ENCODE measurements at regions of chr6 and their contacts with region 1.

Region 1: GRCh38 chr6:138115877-138116660 is 8.8 kb upstream of the PERP start:
- DNase-seq: peak; percentile 74
- ATAC-seq: peak; percentile 89
- H3K4me3 ChIP-seq: no peak overlapping the region
- H3K27ac ChIP-seq: no peak overlapping the region
- H3K4me1 ChIP-seq: no peaks in the 10 kb centered on the region
- H3K27me3 ChIP-seq: peaks cover 19% of the 10 kb centered on the region
- CTCF ChIP-seq: peak; percentile 87
- POLR2A ChIP-seq: no peak
- RAD21 ChIP-seq: peak; percentile 87

Region 2: DNA sequence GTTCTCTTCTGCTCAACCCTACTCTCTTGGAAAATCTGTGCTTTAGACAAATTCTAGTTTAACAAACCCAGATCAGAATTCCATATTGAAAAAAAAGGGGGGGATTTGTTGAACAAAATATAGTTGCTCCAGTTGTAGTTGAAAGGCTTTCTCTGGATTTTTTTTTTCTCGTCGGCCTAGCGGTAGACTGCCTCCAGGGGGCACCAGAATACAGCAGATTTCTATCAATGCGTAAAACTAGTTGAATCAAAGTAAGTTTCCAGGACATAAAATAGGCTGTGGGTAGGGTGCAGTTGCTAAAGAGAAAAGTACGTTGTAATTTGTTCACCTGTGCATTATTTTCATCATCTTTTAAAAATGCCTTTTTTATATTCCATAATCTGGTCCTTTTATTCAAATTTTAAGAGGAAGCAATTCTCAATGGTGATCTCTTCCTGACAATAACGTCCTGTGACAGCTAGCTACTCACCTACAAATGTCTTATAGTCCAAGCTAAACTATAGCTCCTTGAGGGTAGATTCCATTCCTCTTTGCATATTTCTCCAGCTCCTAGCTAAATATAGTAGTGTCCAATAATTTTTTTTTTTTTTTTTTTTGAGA is 114.2 kb before region 1 on chr6:
- CTCF ChIA-PET with region 1: interaction called, 6 read pairs
- POLR2A ChIA-PET with region 1: no interaction called
- dilution Hi-C with region 1: no loop called
- in situ Hi-C with region 1: loop called (anchors 5 kb)
- intact Hi-C with region 1: no loop called
- DNase-seq: peak; percentile 53
- ATAC-seq: peak; percentile 70
- H3K4me3 ChIP-seq: no peak overlapping the region
- H3K27ac ChIP-seq: no peak overlapping the region
- H3K4me1 ChIP-seq: no peaks in the 10 kb centered on the region
- H3K27me3 ChIP-seq: peaks cover 9% of the 10 kb centered on the region
- CTCF ChIP-seq: peak; percentile 90
- POLR2A ChIP-seq: no peak
- RAD21 ChIP-seq: peak; percentile 91

Region 3: DNA sequence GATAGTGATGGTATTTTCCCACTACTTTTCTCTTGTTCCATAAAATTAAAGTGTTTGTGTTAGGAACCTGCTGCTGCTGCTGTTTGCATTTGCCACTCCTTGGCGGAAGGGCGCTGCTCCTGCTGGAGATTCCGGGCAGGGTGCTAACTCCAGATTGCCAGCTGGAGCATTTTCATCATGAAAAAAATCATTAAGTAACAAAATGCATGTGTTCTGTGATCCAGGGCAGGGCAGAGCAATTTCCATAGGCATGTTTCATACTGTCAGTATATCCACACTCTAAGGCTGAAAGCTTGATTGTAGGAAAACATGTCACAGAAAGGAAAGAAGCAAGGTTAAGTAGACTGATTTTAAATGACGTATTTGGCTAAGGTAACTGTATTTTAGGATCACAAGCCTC is 78.2 kb after region 1 on chr6:
- CTCF ChIA-PET with region 1: no interaction called
- POLR2A ChIA-PET with region 1: no interaction called
- dilution Hi-C with region 1: no loop called
- in situ Hi-C with region 1: no loop called
- intact Hi-C with region 1: no loop called
- DNase-seq: no peak
- ATAC-seq: no peak
- H3K4me3 ChIP-seq: no peak overlapping the region
- H3K27ac ChIP-seq: no peak overlapping the region
- H3K4me1 ChIP-seq: no peaks in the 10 kb centered on the region
- H3K27me3 ChIP-seq: peaks cover 7% of the 10 kb centered on the region
- CTCF ChIP-seq: no peak
- POLR2A ChIP-seq: no peak
- RAD21 ChIP-seq: no peak

Region 4: GRCh38 chr6:138397128-138398122 is 281.4 kb after region 1 on chr6:
- CTCF ChIA-PET with region 1: interaction called, 5 read pairs
- POLR2A ChIA-PET with region 1: no interaction called
- dilution Hi-C with region 1: no loop called
- in situ Hi-C with region 1: no loop called
- intact Hi-C with region 1: loop called (anchors 2 kb)
- DNase-seq: peak; percentile 32
- ATAC-seq: peak; percentile 72
- H3K4me3 ChIP-seq: no peak overlapping the region
- H3K27ac ChIP-seq: no peak overlapping the region
- H3K4me1 ChIP-seq: peaks cover 6% of the 10 kb centered on the region
- H3K27me3 ChIP-seq: peaks cover 4% of the 10 kb centered on the region; the same call in 1 of the 2 replicates
- CTCF ChIP-seq: no peak
- POLR2A ChIP-seq: no peak
- RAD21 ChIP-seq: no peak

Region 5: DNA sequence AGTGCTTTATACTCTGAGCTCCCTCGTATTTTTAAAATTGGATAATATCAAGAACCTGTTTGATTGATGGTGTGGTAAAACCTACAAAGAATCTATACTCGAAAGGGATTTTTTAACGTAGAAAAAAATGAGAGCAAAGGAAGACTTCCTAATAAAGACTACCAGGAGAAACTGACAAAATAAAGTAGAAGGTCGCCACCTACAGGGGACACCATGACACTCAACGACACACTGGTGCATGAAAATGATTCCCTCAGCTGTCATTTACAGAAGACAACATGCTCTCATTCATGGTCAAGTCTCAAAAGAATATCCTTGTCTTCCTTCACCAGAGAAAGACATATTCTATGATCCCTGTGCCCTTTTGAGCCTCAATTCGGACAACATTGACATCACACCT is 393.3 kb after region 1 on chr6:
- CTCF ChIA-PET with region 1: no interaction called
- POLR2A ChIA-PET with region 1: no interaction called
- dilution Hi-C with region 1: no loop called
- in situ Hi-C with region 1: no loop called
- intact Hi-C with region 1: loop called (anchors 2 kb)
- DNase-seq: peak; percentile 52
- ATAC-seq: 0 out of 2 replicates have a peak, but pooled peaks have one; percentile 46
- H3K4me3 ChIP-seq: no peak overlapping the region
- H3K27ac ChIP-seq: no peak overlapping the region
- H3K4me1 ChIP-seq: no peaks in the 10 kb centered on the region
- H3K27me3 ChIP-seq: no peaks in the 10 kb centered on the region
- CTCF ChIP-seq: peak; percentile 55
- POLR2A ChIP-seq: no peak
- RAD21 ChIP-seq: peak; percentile 65

Region 6: DNA sequence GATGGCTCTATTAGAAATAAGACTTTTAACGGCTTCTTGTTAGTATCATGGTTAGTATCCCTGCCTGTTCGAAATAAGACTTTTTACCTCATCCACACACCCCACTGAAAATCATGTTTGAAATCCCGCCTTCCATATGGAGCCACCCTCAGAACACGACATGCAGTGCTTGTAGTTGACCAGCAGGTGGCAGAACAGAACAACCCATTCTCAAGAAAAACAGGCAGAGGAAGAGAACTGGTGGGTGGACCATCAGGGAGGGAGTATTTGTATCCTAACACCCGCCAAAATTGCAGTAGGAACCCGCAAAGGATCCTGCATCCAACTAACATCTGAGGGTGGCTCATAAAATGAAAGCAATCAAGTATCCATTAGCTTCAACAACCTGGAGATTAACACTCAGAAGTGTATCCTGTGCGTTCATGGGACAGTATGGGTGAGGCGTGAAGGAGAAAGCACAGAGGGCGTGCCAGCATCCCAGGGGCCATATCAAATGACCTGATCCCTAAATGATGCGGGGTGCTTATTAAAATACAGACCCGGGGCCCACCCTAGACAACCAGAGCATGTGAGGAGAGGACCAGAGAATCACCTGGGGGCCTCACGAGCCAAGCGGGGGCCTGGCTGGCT is 472.9 kb after region 1 on chr6:
- CTCF ChIA-PET with region 1: no interaction called
- POLR2A ChIA-PET with region 1: no interaction called
- dilution Hi-C with region 1: no loop called
- in situ Hi-C with region 1: loop called (anchors 10 kb)
- intact Hi-C with region 1: loop called (anchors 1 kb)
- DNase-seq: peak; percentile 83
- ATAC-seq: peak; percentile 67
- H3K4me3 ChIP-seq: no peak overlapping the region
- H3K27ac ChIP-seq: no peak overlapping the region
- H3K4me1 ChIP-seq: peaks cover 2% of the 10 kb centered on the region
- H3K27me3 ChIP-seq: no peaks in the 10 kb centered on the region
- CTCF ChIP-seq: peak; percentile 92
- POLR2A ChIP-seq: 0 out of 2 replicates have a peak, but pooled peaks have one; percentile 35
- RAD21 ChIP-seq: peak; percentile 90

Region 7: GRCh38 chr6:138765896-138766655 is 650.0 kb after region 1 on chr6:
- CTCF ChIA-PET with region 1: interaction called, 3 read pairs
- POLR2A ChIA-PET with region 1: no interaction called
- dilution Hi-C with region 1: no loop called
- in situ Hi-C with region 1: loop called (anchors 5 kb)
- intact Hi-C with region 1: loop called (anchors 5 kb)
- DNase-seq: peak; percentile 56
- ATAC-seq: peak; percentile 56; the same call in 1 of the 2 replicates
- H3K4me3 ChIP-seq: no peak overlapping the region
- H3K27ac ChIP-seq: no peak overlapping the region
- H3K4me1 ChIP-seq: no peaks in the 10 kb centered on the region
- H3K27me3 ChIP-seq: no peaks in the 10 kb centered on the region
- CTCF ChIP-seq: peak; percentile 71
- POLR2A ChIP-seq: no peak
- RAD21 ChIP-seq: peak; percentile 71

Region 8: DNA sequence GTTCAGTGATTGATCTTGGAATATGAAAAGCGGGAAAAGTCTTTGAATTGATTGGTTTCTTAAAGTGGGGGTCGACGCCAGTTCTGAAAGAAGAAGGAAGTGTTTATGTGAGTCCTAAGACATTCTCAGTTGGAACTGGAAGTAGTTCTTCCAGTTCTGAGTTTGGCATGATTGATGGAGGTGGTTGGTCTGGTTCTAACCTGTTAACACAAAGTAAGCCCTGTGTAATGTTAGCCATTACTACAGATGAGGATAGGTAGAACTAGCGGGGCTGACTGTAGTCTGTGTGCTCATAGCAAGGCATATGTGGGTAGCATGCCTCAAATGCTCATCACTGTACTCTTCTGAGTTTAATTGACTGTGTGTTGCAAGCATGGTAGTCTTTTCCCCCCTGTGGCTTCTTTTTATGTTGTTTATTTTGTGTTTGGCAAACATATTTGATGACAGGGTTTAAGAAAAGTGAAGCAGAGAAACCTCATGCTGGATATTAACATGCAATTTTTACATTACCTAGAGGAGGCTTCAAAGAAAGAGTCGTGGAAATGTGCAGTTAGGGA is 1233.5 kb after region 1 on chr6:
- CTCF ChIA-PET with region 1: no interaction called
- POLR2A ChIA-PET with region 1: no interaction called
- dilution Hi-C with region 1: no loop called
- in situ Hi-C with region 1: loop called (anchors 25 kb)
- intact Hi-C with region 1: loop called (anchors 5 kb)
- DNase-seq: no peak
- ATAC-seq: no peak
- H3K4me3 ChIP-seq: no peak overlapping the region
- H3K27ac ChIP-seq: no peak overlapping the region
- H3K4me1 ChIP-seq: no peaks in the 10 kb centered on the region
- H3K27me3 ChIP-seq: no peaks in the 10 kb centered on the region
- CTCF ChIP-seq: no peak
- POLR2A ChIP-seq: no peak
- RAD21 ChIP-seq: no peak

Measured in IMR-90 (cell line).